ENCODE measurements at regions of chr2 and their contacts with region 1.

Region 1: GRCh38 chr2:37890893-37891495 is 34.1 kb upstream of the RMDN2 start:
- DNase-seq: peak; percentile 40 to 51 (median 47)
- H3K4me3 ChIP-seq: no peak overlapping the region
- H3K4me3 Mint-ChIP-seq: peak overlapping the region in 3 of 8 donors; percentile 22 to 79 (median 51)
- H3K27ac ChIP-seq: no peak overlapping the region
- H3K27ac Mint-ChIP-seq: peak overlapping the region in 1 of 7 donors; percentile 25
- H3K4me1 ChIP-seq: peaks cover 34% of the 10 kb centered on the region
- H3K4me1 Mint-ChIP-seq: peaks cover 35 to 45% (median 37%) of the 10 kb centered on the region in 4 donors
- H3K27me3 ChIP-seq: no peaks in the 10 kb centered on the region
- H3K27me3 Mint-ChIP-seq: peaks cover 3 to 5% of the 10 kb centered on the region in 2 donors

Region 2: GRCh38 chr2:37925063-37925897 is 34.3 kb after region 1 on chr2 and contains the start of gene RMDN2:
- CTCF ChIA-PET with region 1: interaction called, 18 read pairs
- POLR2A ChIA-PET with region 1: no interaction called
- intact Hi-C with region 1: loop called (anchors 1 kb)
- DNase-seq: peak; percentile 64 to 79 (median 71)
- H3K4me3 ChIP-seq: peak within 1 kb of the TSS; percentile 72 to 86
- H3K4me3 Mint-ChIP-seq: peak within 1 kb of the TSS; percentile 91 to 99 (median 96)
- H3K27ac ChIP-seq: peak within 1 kb of the TSS; percentile 43
- H3K27ac Mint-ChIP-seq: peak within 1 kb of the TSS; percentile 81 to 96 (median 88)
- H3K4me1 ChIP-seq: peaks cover 13% of the 10 kb centered on the region
- H3K4me1 Mint-ChIP-seq: peaks cover 6 to 22% (median 12%) of the 10 kb centered on the region in 4 donors
- H3K27me3 ChIP-seq: no peaks in the 10 kb centered on the region
- H3K27me3 Mint-ChIP-seq: peaks cover 0 to 1% of the 10 kb centered on the region in 2 donors
- total RNA-seq, gene RMDN2: 3.3 to 4.0 TPM

Region 3: DNA sequence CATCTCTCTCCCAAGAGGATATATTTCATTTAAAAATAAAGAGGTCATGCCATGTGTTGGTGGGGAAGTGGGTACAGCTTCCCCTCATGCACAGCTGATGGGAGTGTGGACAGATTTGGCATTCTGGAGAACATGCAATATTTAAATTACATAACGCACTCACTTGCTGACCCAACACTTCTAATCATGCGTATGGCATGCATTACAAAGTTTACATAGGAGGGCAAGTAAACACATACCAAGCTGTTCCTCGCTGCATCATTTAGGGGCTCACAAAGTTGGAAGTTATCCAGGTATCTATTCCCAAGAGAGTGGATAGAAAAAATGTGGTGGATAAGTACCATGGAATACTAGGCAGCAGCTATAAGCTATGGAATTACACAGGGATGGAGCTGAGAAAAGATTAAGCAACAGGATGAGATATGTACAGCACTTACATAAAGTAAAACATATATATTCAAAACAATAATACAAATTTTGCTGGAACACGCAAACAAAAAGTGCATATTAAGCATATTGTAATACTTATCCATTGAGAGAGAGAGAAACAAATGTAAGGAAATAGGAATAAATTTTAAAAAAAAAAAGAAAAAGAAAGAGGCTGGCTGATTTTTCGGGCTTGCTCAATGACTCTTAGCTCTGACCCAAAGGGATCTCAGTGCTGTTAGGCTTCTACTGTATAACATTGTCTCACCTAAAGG is 174.0 kb after region 1 on chr2:
- CTCF ChIA-PET with region 1: no interaction called
- POLR2A ChIA-PET with region 1: no interaction called
- intact Hi-C with region 1: no loop called
- DNase-seq: no peak
- H3K4me3 ChIP-seq: no peak overlapping the region
- H3K4me3 Mint-ChIP-seq: no peak overlapping the region
- H3K27ac ChIP-seq: no peak overlapping the region
- H3K27ac Mint-ChIP-seq: no peak overlapping the region
- H3K4me1 ChIP-seq: no peaks in the 10 kb centered on the region
- H3K4me1 Mint-ChIP-seq: no peaks in the 10 kb centered on the region
- H3K27me3 ChIP-seq: no peaks in the 10 kb centered on the region
- H3K27me3 Mint-ChIP-seq: peaks cover 0 to 8% of the 10 kb centered on the region in 2 donors

Region 4: DNA sequence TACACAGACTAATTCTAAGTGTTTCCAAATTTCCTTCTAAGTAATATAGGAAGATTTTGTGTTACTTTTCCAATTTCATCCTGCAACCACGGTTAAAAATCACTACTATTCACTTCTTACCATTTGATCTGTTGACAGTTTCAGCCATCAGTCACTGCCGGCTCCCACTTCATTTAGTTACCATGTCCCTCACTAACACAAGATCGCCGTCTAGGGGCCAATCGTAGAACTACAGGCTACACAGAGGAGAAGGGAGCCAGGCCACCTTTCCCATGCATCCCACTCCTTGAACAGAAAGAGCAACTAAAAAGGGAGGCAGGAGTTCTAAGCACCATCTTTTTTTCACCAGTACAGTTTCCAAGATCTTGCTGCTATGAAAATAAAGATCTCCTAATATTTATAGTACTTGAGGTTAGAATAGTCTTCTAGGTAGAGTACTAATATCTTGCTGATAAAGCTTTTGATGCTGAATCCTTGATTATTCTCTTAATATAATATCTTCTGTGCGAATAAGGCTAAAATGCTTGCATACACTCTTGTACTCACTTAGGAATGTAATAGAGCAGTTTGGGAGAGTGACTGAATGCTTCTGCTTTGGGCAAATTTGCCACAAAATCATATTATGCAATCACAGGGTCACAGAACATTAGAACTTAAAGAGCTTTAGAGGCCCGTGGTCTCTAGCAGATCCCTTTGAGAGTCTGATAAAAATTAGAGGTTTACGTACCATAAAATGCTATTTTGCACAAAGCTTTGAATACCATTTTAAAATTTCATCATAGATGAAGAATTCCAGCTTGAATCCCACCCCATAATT is 224.4 kb after region 1 on chr2:
- CTCF ChIA-PET with region 1: no interaction called
- POLR2A ChIA-PET with region 1: no interaction called
- intact Hi-C with region 1: loop called (anchors 10 kb)
- DNase-seq: peak; percentile 27 to 58 (median 29)
- H3K4me3 ChIP-seq: no peak overlapping the region
- H3K4me3 Mint-ChIP-seq: no peak overlapping the region
- H3K27ac ChIP-seq: no peak overlapping the region
- H3K27ac Mint-ChIP-seq: no peak overlapping the region
- H3K4me1 ChIP-seq: no peaks in the 10 kb centered on the region
- H3K4me1 Mint-ChIP-seq: no peaks in the 10 kb centered on the region
- H3K27me3 ChIP-seq: no peaks in the 10 kb centered on the region
- H3K27me3 Mint-ChIP-seq: peaks cover 20 to 26% of the 10 kb centered on the region in 2 donors

Measured in CD4-positive, alpha-beta memory T cell (primary cell).